ENCODE measurements at regions of chr5 and their contacts with region 1.

Region 1: DNA sequence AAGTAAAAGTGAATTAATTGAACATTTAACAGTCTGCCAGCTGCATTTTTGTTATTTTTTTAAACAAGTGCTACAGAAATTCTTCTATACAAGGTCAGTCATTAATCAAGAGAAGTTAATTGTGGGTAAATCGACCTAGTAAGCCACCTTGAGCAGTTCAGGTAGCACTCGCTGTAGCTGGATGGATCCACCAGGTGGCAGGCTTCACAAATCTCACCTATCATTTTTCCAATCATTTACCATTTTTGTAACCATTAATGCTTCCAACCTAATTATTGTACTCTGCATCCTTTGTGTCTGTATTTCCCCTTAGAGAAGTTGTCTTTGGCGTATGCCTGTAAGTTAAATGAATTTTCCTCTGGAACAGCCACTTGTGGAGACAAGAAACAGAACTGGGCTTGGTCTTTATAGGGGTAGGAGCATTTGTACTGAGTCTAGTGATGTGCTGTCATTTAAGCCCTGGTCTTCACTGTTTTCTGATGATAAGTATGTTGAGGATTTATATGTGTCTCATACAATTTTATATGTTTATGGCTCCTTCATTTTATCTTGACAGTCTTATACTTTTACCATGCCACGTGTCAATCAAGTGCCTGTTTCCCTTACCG is 39.5 kb downstream of the CD180 start:
- DNase-seq: no peak
- H3K4me3 ChIP-seq: no peak overlapping the region
- H3K27ac ChIP-seq: no peak overlapping the region
- H3K4me1 ChIP-seq: peaks cover 28% of the 10 kb centered on the region
- H3K27me3 ChIP-seq: no peaks in the 10 kb centered on the region
- CTCF ChIP-seq: peak; percentile 50 to 91 (median 75)
- POLR2A ChIP-seq: no peak

Region 2: DNA sequence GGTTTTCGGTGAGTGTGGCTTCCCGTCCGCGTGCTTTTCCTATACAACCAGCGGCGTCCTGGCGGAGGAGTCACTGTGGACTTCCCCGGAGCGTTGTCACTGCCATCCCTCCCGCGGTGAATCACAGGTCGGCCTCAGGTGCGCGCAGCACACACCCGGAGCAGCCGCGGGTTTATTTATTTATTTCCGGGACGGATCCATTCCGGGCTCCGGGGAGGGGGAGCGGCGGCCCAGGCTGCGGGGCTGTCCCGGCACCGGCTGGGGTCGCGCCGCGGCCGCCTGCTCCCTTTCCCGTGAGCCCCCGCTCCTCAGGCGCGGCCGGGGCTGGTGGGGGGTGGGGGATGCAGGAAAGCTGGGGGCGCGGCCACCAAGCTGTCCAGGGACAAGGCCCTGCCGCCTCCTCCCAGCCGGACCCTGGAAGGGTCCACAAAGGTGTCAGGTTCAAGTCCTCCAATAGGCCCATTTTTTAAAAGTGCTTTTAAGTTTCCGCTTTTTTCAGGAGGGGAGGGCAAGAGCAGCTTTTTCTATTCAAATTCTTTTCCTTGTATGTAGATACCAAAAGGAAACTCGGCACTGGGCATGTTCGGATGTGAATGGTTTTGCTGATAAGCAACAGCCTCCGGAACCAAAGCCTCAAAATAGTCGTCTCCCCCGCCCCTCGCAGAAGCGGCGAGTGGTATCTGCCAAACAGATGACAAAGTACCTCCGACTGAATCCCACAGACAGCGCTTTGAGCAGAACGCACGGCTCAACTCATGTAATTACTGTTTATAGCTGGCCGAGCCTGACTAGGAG is 152.9 kb before region 1 on chr5:
- intact Hi-C with region 1: loop called (anchors 10 kb)
- DNase-seq: peak in 1 of 2 donors; percentile 96
- H3K4me3 ChIP-seq: peak overlapping the region; percentile 49 to 67
- H3K27ac ChIP-seq: peak overlapping the region; percentile 89
- H3K4me1 ChIP-seq: peaks cover 27% of the 10 kb centered on the region
- H3K27me3 ChIP-seq: no peaks in the 10 kb centered on the region
- CTCF ChIP-seq: no peak
- POLR2A ChIP-seq: peak in 1 of 2 donors; percentile 45

Region 3: GRCh38 chr5:67209142-67209771 is 52.2 kb after region 1 on chr5:
- intact Hi-C with region 1: loop called (anchors 10 kb)
- DNase-seq: no peak
- H3K4me3 ChIP-seq: no peak overlapping the region
- H3K27ac ChIP-seq: no peak overlapping the region
- H3K4me1 ChIP-seq: peaks cover 25% of the 10 kb centered on the region
- H3K27me3 ChIP-seq: no peaks in the 10 kb centered on the region
- CTCF ChIP-seq: peak; percentile 73 to 93 (median 83)
- POLR2A ChIP-seq: no peak